Colonic mucosa (tissue), 4 donors: ENCODE measurements at regions of chr7 and their contacts with region 1.

Region 1: GRCh38 chr7:134432296-134433152 is 26.4 kb downstream of the AKR1B1 start:
- DNase-seq: peak; percentile 89
- H3K4me3 ChIP-seq: peak overlapping the region; percentile 30
- H3K27ac ChIP-seq: peak overlapping the region; percentile 89
- H3K4me1 ChIP-seq: peaks cover 6% of the 10 kb centered on the region
- H3K27me3 ChIP-seq: no peaks in the 10 kb centered on the region
- CTCF ChIP-seq: peak; percentile 77

Region 2: GRCh38 chr7:134394046-134394445 is 38.5 kb before region 1 on chr7:
- intact Hi-C with region 1: no loop called
- DNase-seq: no peak
- H3K4me3 ChIP-seq: no peak overlapping the region
- H3K27ac ChIP-seq: no peak overlapping the region
- H3K4me1 ChIP-seq: no peaks in the 10 kb centered on the region
- H3K27me3 ChIP-seq: no peaks in the 10 kb centered on the region
- CTCF ChIP-seq: no peak

Region 3: DNA sequence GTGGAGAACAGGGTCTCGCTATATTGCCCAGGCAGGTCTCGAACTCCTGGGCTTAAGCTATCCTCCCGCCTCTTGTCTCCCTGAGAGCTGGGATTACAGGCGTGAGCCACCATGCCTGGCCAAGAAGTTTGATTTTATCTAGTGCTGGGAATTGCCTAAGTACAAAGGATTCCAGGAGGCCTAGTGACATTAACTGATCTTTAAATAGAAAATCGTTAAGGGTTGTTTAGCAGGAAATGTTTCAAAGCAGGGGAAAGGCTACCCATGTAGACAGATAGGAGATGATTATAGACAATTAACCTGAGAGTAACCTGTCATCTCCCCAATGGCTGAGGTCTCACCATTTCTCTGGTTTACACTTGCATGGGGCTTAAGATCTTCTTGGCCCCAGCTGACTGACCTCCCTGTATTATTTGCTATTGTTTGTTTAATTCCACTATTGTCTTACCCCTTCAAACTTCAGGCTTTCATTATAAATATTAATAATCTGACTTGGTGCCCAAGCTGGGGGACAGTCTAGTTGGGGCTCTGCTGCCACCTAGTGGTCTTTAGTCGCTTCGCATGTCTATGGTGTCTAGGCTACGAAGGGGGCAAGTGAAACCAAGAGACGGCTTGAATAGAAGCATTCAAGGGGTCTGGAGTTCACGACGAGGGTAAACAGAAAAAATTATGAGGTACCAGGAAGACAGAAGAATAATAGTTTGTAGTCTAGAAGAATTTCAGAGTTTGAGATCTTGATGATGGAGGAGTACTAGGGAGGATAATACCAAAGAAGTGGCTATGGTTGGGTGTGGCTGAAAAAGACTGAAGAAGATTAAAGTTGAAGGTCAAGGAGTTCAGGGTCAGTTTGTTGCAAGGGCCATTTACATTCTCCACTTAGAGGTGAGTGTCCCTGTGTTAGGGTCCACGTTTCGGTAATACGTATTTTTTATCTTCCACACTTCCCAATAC is 173.7 kb after region 1 on chr7:
- intact Hi-C with region 1: loop called (anchors 5 kb)
- DNase-seq: peak; percentile 64
- H3K4me3 ChIP-seq: no peak overlapping the region
- H3K27ac ChIP-seq: no peak overlapping the region
- H3K4me1 ChIP-seq: no peaks in the 10 kb centered on the region
- H3K27me3 ChIP-seq: no peaks in the 10 kb centered on the region
- CTCF ChIP-seq: peak; percentile 93